Endothelial cell of umbilical vein (primary cell): ENCODE measurements at regions of chr14 and their contacts with region 1.

Region 1: DNA sequence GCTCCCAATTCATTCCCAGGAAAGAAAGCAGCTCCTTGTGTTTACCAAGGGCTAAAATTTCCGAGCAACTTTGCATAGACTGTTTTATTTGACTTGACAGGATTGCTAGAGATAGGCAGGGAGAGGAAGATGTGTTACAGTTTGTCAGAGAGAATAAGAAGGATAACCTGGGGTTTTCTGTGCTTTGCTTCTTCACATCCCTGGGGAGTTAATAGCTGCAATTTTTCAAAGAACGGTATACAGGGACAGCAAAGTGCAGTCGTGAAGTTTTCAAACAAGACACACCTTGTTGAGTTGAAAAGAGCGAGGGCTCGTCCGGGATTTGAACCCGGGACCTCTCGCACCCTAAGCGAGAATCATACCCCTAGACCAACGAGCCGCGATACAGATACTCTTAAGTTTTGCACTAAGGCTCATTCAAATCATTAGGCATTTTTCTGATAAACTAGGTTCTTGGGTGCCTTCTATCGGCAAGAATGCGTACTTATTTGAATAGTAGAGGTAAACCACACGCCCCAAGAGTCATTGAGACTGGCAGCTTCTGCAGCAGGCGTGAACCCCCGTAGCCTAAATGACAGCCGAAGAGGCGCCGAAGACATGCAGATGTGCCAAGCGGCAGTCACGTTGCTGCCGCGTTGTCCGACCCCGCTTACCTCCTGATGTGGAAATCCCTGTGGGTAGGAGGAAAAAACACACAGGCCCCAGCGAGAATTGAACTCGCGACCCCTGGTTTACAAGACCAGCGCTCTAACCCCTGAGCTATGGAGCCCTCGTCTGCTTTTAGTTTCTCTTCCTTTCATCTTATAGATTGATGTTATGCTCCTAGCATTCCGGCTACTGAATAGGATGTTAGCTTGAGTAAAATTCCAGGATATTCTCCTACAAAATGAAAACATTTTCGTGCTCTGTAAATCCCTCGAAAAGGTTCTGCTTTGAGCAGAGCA is 22.2 kb upstream of the RNASE12 start:
- DNase-seq: peak; percentile 97
- H3K4me3 ChIP-seq: peak overlapping the region; percentile 48 to 86 (median 70)
- H3K27ac ChIP-seq: peak overlapping the region; percentile 27
- H3K4me1 ChIP-seq: peaks cover 11% of the 10 kb centered on the region
- H3K27me3 ChIP-seq: peaks cover 3 to 6% of the 10 kb centered on the region in 2 experiments
- CTCF ChIP-seq: peak; percentile 55 to 65
- POLR2A ChIP-seq: no peak

Region 2: DNA sequence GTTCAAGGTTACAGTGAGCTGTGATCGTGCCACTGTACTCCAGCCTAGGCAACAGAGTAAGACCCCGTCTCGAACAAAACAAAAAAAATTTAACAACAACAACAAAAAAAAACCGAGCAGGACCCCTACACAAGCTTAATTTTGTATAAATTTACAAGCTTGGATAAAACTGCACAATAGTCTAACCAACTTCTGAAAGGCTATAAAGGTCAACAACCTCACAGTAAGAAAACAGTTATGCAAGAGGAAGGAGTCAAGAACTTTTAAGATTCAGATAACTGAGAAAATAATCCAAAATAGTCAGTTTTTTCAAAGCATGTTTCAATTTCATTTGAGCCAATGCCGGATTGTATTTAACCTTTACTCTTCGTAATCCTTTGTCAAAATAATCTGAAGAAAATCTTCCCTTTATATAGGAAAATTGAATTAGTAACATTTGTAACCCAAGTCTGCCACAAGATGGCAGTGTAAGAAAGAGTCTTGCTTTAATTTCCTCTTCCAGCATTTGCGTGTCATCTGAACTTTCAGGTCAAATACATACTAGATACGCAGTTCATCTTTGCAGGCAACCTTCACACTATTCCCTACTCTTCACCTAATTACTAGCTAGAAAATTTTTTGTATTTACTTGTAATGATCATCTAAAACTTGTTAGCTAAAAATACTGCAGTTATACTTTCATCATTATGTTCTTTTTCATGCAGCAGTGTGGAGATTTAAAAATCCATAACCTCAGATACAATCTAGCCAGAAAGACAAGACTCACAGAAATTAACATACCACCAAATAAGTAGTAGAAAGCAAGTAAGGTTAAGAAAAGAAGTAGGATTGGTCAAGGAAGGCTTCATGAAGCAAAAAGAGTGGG is 286.1 kb before region 1 on chr14:
- CTCF ChIA-PET with region 1: interaction called, 83 read pairs
- POLR2A ChIA-PET with region 1: no interaction called
- dilution Hi-C with region 1: no loop called
- intact Hi-C with region 1: loop called (anchors 1 kb)
- DNase-seq: peak; percentile 75
- H3K4me3 ChIP-seq: no peak overlapping the region
- H3K27ac ChIP-seq: no peak overlapping the region
- H3K4me1 ChIP-seq: peaks cover 18% of the 10 kb centered on the region
- H3K27me3 ChIP-seq: no peaks in the 10 kb centered on the region
- CTCF ChIP-seq: peak; percentile 42 to 56
- POLR2A ChIP-seq: no peak

Region 3: GRCh38 chr14:20461274-20462001 is 151.9 kb before region 1 on chr14 and contains the start of gene PIP4P1:
- CTCF ChIA-PET with region 1: interaction called, 3 read pairs
- POLR2A ChIA-PET with region 1: no interaction called
- dilution Hi-C with region 1: no loop called
- intact Hi-C with region 1: loop called (anchors 1 kb)
- DNase-seq: peak; percentile 100
- H3K4me3 ChIP-seq: peak within 1 kb of the TSS; percentile 43 to 78 (median 66)
- H3K27ac ChIP-seq: peak within 1 kb of the TSS; percentile 35
- H3K4me1 ChIP-seq: peaks cover 18% of the 10 kb centered on the region
- H3K27me3 ChIP-seq: peaks cover 2 to 8% of the 10 kb centered on the region in 2 experiments
- CTCF ChIP-seq: no peak
- POLR2A ChIP-seq: no peak
- total RNA-seq, gene PIP4P1: 28.6 and 33.6 TPM in 2 replicates

Region 4: GRCh38 chr14:20632682-20633428 is 19.5 kb after region 1 on chr14:
- CTCF ChIA-PET with region 1: interaction called, 20 read pairs
- POLR2A ChIA-PET with region 1: no interaction called
- dilution Hi-C with region 1: no loop called
- intact Hi-C with region 1: loop called (anchors 1 kb)
- DNase-seq: peak; percentile 61
- H3K4me3 ChIP-seq: peak overlapping the region in 2 of 3 experiments; percentile 17 to 49
- H3K27ac ChIP-seq: no peak overlapping the region
- H3K4me1 ChIP-seq: peaks cover 24% of the 10 kb centered on the region
- H3K27me3 ChIP-seq: peaks cover 19 to 36% of the 10 kb centered on the region in 2 experiments
- CTCF ChIP-seq: no peak
- POLR2A ChIP-seq: no peak

Region 5: GRCh38 chr14:20690848-20691523 is 77.6 kb after region 1 on chr14:
- CTCF ChIA-PET with region 1: interaction called, 49 read pairs
- POLR2A ChIA-PET with region 1: no interaction called
- dilution Hi-C with region 1: no loop called
- intact Hi-C with region 1: loop called (anchors 1 kb)
- DNase-seq: peak; percentile 77
- H3K4me3 ChIP-seq: no peak overlapping the region
- H3K27ac ChIP-seq: no peak overlapping the region
- H3K4me1 ChIP-seq: peaks cover 7% of the 10 kb centered on the region
- H3K27me3 ChIP-seq: no peaks in the 10 kb centered on the region
- CTCF ChIP-seq: peak; percentile 72 to 79
- POLR2A ChIP-seq: no peak